Lower leg skin (tissue), 4 donors: ENCODE measurements at regions of chr11 and their contacts with region 1.

Region 1: GRCh38 chr11:73384872-73385689 is 8.9 kb downstream of the RELT start:
- DNase-seq: no peak
- H3K4me3 ChIP-seq: no peak overlapping the region
- CTCF ChIP-seq: no peak
- POLR2A ChIP-seq: no peak

Region 2: GRCh38 chr11:72209101-72209500 is 1176.0 kb before region 1 on chr11:
- intact Hi-C with region 1: no loop called
- DNase-seq: peak in 1 of 2 donors; percentile 73
- H3K4me3 ChIP-seq: no peak overlapping the region
- CTCF ChIP-seq: no peak
- POLR2A ChIP-seq: no peak

Region 3: DNA sequence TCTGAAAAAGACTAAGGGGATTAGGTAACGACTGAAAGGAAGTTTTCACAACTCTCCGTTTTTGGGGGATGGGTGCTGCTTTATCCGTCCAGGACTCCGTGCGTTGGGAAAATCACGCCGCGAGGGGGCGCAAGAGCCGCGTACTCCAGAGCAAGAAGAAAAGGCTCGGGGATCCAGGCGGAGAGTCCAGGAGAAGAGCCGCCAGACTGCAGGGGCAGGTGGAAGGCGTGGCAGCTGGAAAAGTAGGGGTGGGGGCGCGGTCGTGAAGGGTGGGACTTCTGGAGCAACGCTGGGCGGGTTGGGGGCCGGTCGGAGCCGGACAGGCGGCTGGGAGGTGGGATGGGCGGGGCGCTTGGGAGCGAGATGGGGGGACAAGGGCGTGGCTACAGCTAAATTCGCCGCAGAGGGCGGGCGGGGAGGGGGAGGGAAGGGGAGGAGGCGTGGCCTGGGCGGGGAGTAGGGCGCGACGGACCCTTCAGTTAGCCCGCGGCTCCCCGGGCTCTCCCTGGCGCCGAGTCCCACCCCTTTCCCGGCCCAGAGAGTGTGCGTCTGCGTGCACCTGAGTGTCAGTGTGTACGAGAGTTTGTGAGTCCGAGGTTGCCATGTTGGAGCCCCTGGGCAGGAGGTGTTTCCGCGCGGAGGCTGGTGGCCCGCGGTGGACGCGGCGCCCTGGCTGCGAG is 77.6 kb before region 1 on chr11:
- intact Hi-C with region 1: loop called (anchors 10 kb)
- DNase-seq: peak; percentile 96 to 99
- H3K4me3 ChIP-seq: peak overlapping the region; percentile 46
- CTCF ChIP-seq: peak in 1 of 3 donors; percentile 52
- POLR2A ChIP-seq: no peak